ENCODE measurements at regions of chr2 and their contacts with region 1.

Region 1: DNA sequence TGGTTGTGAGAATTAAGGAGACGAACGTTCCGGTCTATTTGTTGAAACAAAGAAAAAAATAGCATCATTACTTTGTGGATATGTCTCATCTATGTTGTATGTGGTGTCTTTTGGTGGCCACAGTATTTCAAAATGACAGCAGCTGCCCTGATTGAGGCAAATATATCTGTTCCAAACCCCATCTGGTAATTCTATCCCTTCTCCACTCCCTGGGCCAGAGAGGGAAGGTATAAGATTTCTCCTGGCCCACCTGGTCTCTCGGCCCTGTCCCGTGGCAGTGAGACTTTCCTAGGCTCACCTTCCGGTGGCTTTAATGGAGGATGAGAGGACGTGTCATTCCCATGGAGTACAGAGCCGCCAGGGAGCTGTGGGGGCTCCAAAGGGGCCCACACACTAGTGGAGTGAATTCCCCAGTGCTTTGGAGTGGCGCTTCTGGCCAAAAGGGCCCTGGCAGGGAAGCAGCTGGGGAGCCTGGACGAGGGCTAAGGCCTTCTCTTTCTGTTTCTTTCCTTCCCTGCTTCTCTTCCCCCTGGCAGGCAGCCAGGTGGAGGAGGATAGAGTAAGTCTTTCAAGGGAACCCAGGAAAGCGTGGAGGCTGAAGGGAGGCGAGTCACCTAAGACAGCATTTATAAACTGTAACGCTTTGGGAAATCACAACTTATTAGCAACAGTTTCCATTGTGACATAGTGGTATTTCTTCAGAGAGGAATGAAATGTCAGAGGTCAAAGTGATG is 5.6 kb downstream of the FOSL2 start:
- DNase-seq: no peak
- H3K4me3 ChIP-seq: peak overlapping the region in 1 of 2 experiments; percentile 84; a peak in 1 of 4 replicates
- H3K27ac ChIP-seq: peak overlapping the region in 1 of 2 experiments; percentile 97; a peak in 1 of 4 replicates
- H3K4me1 ChIP-seq: peaks cover 9 to 30% of the 10 kb centered on the region in 2 experiments
- H3K27me3 ChIP-seq: no peaks in the 10 kb centered on the region
- CTCF ChIP-seq: no peak
- EP300 ChIP-seq: no peak
- RAD21 ChIP-seq: no peak

Region 2: GRCh38 chr2:28413142-28413898 is 15.1 kb after region 1 on chr2:
- CTCF ChIA-PET with region 1: interaction called, 11 read pairs
- POLR2A ChIA-PET with region 1: interaction called, 3 read pairs
- DNase-seq: no peak
- H3K4me3 ChIP-seq: no peak overlapping the region
- H3K27ac ChIP-seq: no peak overlapping the region
- H3K4me1 ChIP-seq: 0 out of 4 replicates have a peak, but pooled peaks cover 0 to 5% of the 10 kb centered on the region in 2 experiments
- H3K27me3 ChIP-seq: no peaks in the 10 kb centered on the region
- CTCF ChIP-seq: no peak; the same call in 1 of the 2 replicates
- EP300 ChIP-seq: no peak
- RAD21 ChIP-seq: no peak

Region 3: DNA sequence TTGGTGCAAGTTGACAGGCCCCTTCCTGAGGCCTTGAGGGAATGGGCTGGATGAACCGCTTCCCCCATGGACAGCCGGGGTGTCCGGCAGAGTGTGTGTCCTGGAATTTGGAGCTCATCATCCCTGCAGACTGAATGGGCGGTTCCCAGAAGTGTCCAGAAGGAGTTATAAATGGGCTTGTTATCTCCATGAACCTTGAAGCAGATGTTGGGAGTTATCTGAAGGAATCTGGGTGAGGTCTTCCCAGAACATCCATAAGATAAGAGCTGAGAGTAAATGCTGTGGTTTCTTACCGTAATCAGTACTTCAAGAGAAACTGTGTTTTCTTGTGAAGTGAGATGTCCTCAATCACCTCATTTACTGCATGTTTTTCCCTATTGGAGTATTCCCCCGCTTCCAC is 118.7 kb after region 1 on chr2:
- CTCF ChIA-PET with region 1: no interaction called
- POLR2A ChIA-PET with region 1: no interaction called
- DNase-seq: no peak
- H3K4me3 ChIP-seq: no peak overlapping the region
- H3K27ac ChIP-seq: no peak overlapping the region
- H3K4me1 ChIP-seq: peaks cover 0 to 13% of the 10 kb centered on the region in 2 experiments; a peak in 2 of 4 replicates
- H3K27me3 ChIP-seq: peaks cover 47% of the 10 kb centered on the region; the same call in 1 of the 2 replicates
- CTCF ChIP-seq: no peak
- EP300 ChIP-seq: no peak
- RAD21 ChIP-seq: no peak